GM12878 (cell line): ENCODE measurements at regions of chr1 and their contacts with region 1.

Region 1: DNA sequence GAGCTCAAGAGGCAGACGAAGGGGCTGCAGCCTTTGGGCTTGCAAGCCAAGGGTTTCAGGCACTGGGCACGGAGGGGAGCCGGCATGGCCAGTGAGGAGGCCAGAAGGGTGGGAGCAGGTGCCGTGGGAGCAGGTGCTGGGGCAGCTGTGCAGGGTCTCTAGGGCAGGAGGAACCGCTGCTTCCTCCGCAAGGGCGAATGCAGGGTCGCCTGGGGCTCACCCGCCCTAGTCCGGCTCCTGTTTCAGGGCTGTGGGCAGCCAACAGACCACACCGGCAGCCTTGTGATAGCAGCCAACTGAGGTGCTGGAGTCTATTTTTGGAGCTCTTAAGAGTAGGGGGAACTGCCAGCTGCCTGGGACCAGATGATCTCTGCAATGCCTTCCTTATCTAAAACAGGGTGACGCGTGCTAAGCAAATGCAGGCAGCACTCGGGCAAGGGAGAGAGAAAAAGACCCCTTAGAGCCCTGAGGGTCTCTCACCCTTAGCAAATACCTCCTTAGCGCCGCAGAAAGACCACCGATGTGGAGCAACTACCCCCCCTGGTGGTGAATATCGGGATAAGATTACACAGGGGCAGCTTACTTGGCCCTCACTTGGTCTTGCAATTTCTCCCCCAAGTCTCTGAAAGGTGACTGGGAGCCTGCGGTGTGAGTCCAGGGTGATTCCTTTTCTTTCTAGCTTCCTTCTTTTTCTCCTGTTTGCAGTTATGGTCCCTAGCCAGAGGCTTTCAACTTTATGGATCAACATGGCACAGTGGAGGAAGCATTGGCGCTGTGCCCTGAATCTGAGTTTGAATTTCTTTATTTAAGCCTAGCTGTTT is 20.7 kb upstream of the MAPKAPK2 start:
- DNase-seq: no peak
- ATAC-seq: peak; percentile 94
- H3K4me3 ChIP-seq: peak overlapping the region; percentile 44; the same call in 1 of the 2 replicates
- H3K27ac ChIP-seq: no peak overlapping the region
- H3K4me1 ChIP-seq: peaks cover 10% of the 10 kb centered on the region
- H3K27me3 ChIP-seq: no peaks in the 10 kb centered on the region
- CTCF ChIP-seq: peak; percentile 81 to 85 (median 84)
- EP300 ChIP-seq: no peak
- POLR2A ChIP-seq: no peak
- RAD21 ChIP-seq: peak; percentile 89

Region 2: DNA sequence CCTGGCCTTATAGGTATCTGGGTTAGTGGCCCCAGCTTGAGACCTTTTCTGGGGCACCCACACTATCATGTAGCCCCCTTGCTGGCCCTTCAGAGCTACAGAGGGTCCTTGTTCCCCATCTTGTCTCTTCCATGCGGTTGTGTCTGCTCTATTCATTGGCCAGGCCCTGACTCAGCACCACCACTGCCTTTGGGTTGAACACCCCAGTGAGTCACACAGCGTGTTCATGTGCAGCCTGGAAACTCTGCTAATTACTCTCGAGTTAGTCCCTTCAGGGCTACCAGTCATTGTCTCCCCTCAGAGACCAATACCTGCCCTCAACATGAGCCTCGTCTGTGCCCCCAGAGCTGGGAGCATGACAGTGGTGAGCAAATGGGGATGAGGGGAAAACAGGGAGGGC is 221.9 kb before region 1 on chr1:
- CTCF ChIA-PET with region 1: no interaction called
- POLR2A ChIA-PET with region 1: no interaction called
- RAD21 ChIA-PET with region 1: no interaction called
- SMC1A ChIA-PET with region 1: no interaction called
- in situ Hi-C with region 1: no loop called
- intact Hi-C with region 1: no loop called
- DNase-seq: no peak
- ATAC-seq: no peak
- H3K4me3 ChIP-seq: no peak overlapping the region
- H3K27ac ChIP-seq: no peak overlapping the region
- H3K4me1 ChIP-seq: no peaks in the 10 kb centered on the region
- H3K27me3 ChIP-seq: no peaks in the 10 kb centered on the region
- CTCF ChIP-seq: no peak
- EP300 ChIP-seq: no peak
- POLR2A ChIP-seq: no peak
- RAD21 ChIP-seq: no peak

Region 3: GRCh38 chr1:206469933-206470691 is 193.9 kb before region 1 on chr1 and contains the start of gene IKBKE:
- CTCF ChIA-PET with region 1: interaction called, 11 read pairs
- POLR2A ChIA-PET with region 1: no interaction called
- RAD21 ChIA-PET with region 1: interaction called, 5 read pairs
- SMC1A ChIA-PET with region 1: interaction called, 8 read pairs
- in situ Hi-C with region 1: no loop called
- intact Hi-C with region 1: no loop called
- DNase-seq: no peak
- ATAC-seq: peak; percentile 73
- H3K4me3 ChIP-seq: peak within 1 kb of the TSS; percentile 94
- H3K27ac ChIP-seq: peak within 1 kb of the TSS; percentile 88
- H3K4me1 ChIP-seq: peaks cover 66% of the 10 kb centered on the region
- H3K27me3 ChIP-seq: no peaks in the 10 kb centered on the region
- CTCF ChIP-seq: peak; percentile 7 to 22 (median 17); a peak in 1 of 6 replicates
- EP300 ChIP-seq: no peak
- POLR2A ChIP-seq: peak; percentile 68
- RAD21 ChIP-seq: no peak
- polyA plus RNA-seq, gene IKBKE: 12.8 to 19.2 TPM

Region 4: DNA sequence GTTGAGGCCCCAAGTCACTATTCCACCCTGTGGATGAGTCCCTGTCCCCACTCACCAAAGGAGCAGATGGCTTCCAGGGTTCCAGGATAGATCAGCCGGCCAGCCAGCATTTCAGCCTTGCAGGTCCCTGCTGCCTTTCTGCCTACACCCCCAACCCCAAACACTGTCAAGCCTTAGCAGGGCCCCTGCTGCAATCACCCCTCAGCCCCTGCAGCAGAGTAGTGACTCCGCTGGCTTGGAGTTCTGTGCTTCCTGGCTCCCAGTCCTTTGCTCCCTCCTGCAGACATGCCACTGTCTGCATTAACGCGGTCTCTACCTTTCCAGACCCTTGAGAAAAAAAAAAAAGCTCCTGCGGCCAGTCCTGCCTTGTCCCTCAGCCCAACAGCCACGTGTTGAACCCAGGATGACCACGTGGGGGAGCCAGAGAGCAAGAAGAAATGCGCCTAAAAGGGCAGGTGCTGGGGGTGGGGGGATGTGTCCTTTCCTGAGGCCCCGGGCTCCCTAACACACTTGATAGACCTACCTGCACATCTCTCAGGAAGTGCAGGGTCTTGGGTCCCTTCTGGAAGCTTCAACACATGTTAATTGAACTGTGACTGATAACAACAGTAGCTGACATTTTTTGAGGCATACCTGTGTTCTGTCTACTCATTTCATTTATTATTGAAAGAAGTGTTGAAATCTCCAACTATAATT is 119.3 kb before region 1 on chr1:
- CTCF ChIA-PET with region 1: interaction called, 30 read pairs
- POLR2A ChIA-PET with region 1: no interaction called
- RAD21 ChIA-PET with region 1: interaction called, 13 read pairs
- SMC1A ChIA-PET with region 1: interaction called, 14 read pairs
- in situ Hi-C with region 1: no loop called
- intact Hi-C with region 1: no loop called
- DNase-seq: no peak
- ATAC-seq: peak; percentile 98
- H3K4me3 ChIP-seq: no peak overlapping the region
- H3K27ac ChIP-seq: no peak overlapping the region
- H3K4me1 ChIP-seq: no peaks in the 10 kb centered on the region; the same call in 1 of the 2 replicates
- H3K27me3 ChIP-seq: no peaks in the 10 kb centered on the region
- CTCF ChIP-seq: peak; percentile 86 to 91 (median 88)
- EP300 ChIP-seq: no peak
- POLR2A ChIP-seq: no peak
- RAD21 ChIP-seq: peak; percentile 98

Region 5: GRCh38 chr1:206612129-206612876 is 51.7 kb before region 1 on chr1 and contains the start of gene EIF2D:
- CTCF ChIA-PET with region 1: interaction called, 197 read pairs
- POLR2A ChIA-PET with region 1: interaction called, 5 read pairs
- RAD21 ChIA-PET with region 1: interaction called, 45 read pairs
- SMC1A ChIA-PET with region 1: interaction called, 70 read pairs
- in situ Hi-C with region 1: no loop called
- intact Hi-C with region 1: loop called (anchors 1 kb)
- DNase-seq: peak; percentile 58
- ATAC-seq: peak; percentile 82
- H3K4me3 ChIP-seq: peak within 1 kb of the TSS; percentile 83
- H3K27ac ChIP-seq: peak within 1 kb of the TSS; percentile 80
- H3K4me1 ChIP-seq: peaks cover 23% of the 10 kb centered on the region
- H3K27me3 ChIP-seq: no peaks in the 10 kb centered on the region
- CTCF ChIP-seq: peak; percentile 96 to 99 (median 98); a peak in 5 of 6 replicates
- EP300 ChIP-seq: peak in 1 of 2 experiments; percentile 37; a peak in 1 of 4 replicates
- POLR2A ChIP-seq: peak; percentile 100
- RAD21 ChIP-seq: peak; percentile 59
- polyA plus RNA-seq, gene EIF2D: 65.4 to 77.5 TPM

Region 6: DNA sequence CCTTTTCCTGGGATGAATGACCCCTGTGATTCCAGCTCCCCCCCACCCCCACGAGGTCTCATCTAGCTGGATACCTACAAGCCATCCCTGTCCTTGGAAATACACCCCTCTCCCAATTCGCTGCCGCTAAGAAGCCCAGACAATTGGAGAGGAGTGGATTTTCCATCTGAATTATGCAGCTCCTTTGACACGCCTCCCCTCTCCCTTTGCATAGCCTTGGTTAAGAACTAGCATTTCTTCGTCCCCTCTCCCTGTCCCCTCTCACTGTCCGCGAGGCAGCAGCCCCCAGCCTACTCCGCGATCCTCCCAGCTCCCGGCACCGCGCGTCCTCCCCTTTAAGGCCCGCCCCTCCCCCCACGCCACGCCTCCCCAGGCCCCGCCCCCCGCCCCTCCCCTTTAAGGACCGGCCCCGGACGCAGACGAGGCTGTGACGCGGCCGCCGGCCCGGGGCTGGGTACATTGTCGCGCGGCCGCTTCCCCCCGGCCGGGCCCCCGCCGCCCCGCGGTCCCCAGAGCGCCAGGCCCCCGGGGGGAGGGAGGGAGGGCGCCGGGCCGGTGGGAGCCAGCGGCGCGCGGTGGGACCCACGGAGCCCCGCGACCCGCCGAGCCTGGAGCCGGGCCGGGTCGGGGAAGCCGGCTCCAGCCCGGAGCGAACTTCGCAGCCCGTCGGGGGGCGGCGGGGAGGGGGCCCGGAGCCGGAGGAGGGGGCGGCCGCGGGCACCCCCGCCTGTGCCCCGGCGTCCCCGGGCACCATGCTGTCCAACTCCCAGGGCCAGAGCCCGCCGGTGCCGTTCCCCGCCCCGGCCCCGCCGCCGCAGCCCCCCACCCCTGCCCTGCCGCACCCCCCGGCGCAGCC is 20.7 kb after region 1 on chr1 and contains the start of gene MAPKAPK2:
- CTCF ChIA-PET with region 1: interaction called, 24 read pairs
- POLR2A ChIA-PET with region 1: interaction called, 12 read pairs
- RAD21 ChIA-PET with region 1: interaction called, 14 read pairs
- SMC1A ChIA-PET with region 1: interaction called, 27 read pairs
- in situ Hi-C with region 1: no loop called
- intact Hi-C with region 1: no loop called
- DNase-seq: no peak
- ATAC-seq: peak; percentile 55
- H3K4me3 ChIP-seq: peak within 1 kb of the TSS; percentile 91
- H3K27ac ChIP-seq: peak within 1 kb of the TSS; percentile 86
- H3K4me1 ChIP-seq: peaks cover 42% of the 10 kb centered on the region
- H3K27me3 ChIP-seq: no peaks in the 10 kb centered on the region
- CTCF ChIP-seq: no peak
- EP300 ChIP-seq: no peak
- POLR2A ChIP-seq: peak; percentile 64
- RAD21 ChIP-seq: no peak
- polyA plus RNA-seq, gene MAPKAPK2: 0.72 to 4.9 TPM

Region 7: GRCh38 chr1:206725109-206725963 is 61.3 kb after region 1 on chr1:
- CTCF ChIA-PET with region 1: interaction called, 46 read pairs
- POLR2A ChIA-PET with region 1: no interaction called
- RAD21 ChIA-PET with region 1: interaction called, 15 read pairs
- SMC1A ChIA-PET with region 1: interaction called, 67 read pairs
- in situ Hi-C with region 1: no loop called
- intact Hi-C with region 1: no loop called
- DNase-seq: no peak
- ATAC-seq: peak; percentile 84
- H3K4me3 ChIP-seq: no peak overlapping the region
- H3K27ac ChIP-seq: 0 out of 2 replicates have a peak overlapping the region, but pooled peaks have one; percentile 34
- H3K4me1 ChIP-seq: peaks cover 29% of the 10 kb centered on the region
- H3K27me3 ChIP-seq: no peaks in the 10 kb centered on the region
- CTCF ChIP-seq: peak; percentile 59 to 78 (median 73)
- EP300 ChIP-seq: no peak
- POLR2A ChIP-seq: no peak
- RAD21 ChIP-seq: peak; percentile 53

Region 8: DNA sequence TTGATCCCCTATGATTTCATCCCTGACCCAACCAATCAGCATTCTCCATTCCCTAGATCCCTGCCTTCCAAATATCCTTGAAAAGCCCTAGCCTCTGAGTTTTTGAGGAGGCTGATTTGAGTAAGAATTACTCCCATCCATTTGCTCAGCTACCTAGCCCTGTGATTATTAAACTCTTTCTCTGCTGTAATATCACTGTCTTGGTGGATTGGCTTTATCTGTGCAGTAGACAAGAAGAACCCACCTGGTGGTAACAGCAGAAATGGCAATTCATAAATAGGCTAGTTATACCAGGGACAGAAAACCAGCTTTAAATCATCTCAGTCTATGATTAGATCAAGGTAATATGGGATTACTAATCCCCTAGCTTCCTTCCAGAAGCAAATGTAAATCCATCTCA is 214.4 kb after region 1 on chr1:
- CTCF ChIA-PET with region 1: no interaction called
- POLR2A ChIA-PET with region 1: no interaction called
- RAD21 ChIA-PET with region 1: no interaction called
- SMC1A ChIA-PET with region 1: no interaction called
- in situ Hi-C with region 1: no loop called
- intact Hi-C with region 1: no loop called
- DNase-seq: no peak
- ATAC-seq: no peak
- H3K4me3 ChIP-seq: no peak overlapping the region
- H3K27ac ChIP-seq: no peak overlapping the region
- H3K4me1 ChIP-seq: no peaks in the 10 kb centered on the region
- H3K27me3 ChIP-seq: no peaks in the 10 kb centered on the region
- CTCF ChIP-seq: peak in 2 of 3 experiments; percentile 6 to 7; a peak in 1 of 6 replicates
- EP300 ChIP-seq: no peak
- POLR2A ChIP-seq: no peak
- RAD21 ChIP-seq: no peak

Region 9: GRCh38 chr1:207362962-207363858 is 699.2 kb after region 1 on chr1:
- CTCF ChIA-PET with region 1: no interaction called
- POLR2A ChIA-PET with region 1: no interaction called
- RAD21 ChIA-PET with region 1: no interaction called
- SMC1A ChIA-PET with region 1: no interaction called
- in situ Hi-C with region 1: no loop called
- intact Hi-C with region 1: no loop called
- DNase-seq: no peak
- ATAC-seq: no peak
- H3K4me3 ChIP-seq: no peak overlapping the region
- H3K27ac ChIP-seq: no peak overlapping the region
- H3K4me1 ChIP-seq: no peaks in the 10 kb centered on the region
- H3K27me3 ChIP-seq: no peaks in the 10 kb centered on the region
- CTCF ChIP-seq: no peak
- EP300 ChIP-seq: no peak
- POLR2A ChIP-seq: no peak
- RAD21 ChIP-seq: no peak